PC-3 (cell line): ENCODE measurements at regions of chr7 and their contacts with region 1.

Region 1: GRCh38 chr7:117949232-117949631 is 76.0 kb upstream of the CTTNBP2 start:
- DNase-seq: peak; percentile 93
- ATAC-seq: peak; percentile 76
- H3K4me3 ChIP-seq: no peak overlapping the region
- H3K27ac ChIP-seq: peak overlapping the region; percentile 92
- H3K4me1 ChIP-seq: peaks cover 67% of the 10 kb centered on the region
- H3K27me3 ChIP-seq: no peaks in the 10 kb centered on the region
- CTCF ChIP-seq: peak; percentile 54

Region 2: GRCh38 chr7:117750612-117751563 is 198.3 kb before region 1 on chr7:
- CTCF ChIA-PET with region 1: no interaction called
- POLR2A ChIA-PET with region 1: no interaction called
- intact Hi-C with region 1: loop called (anchors 2 kb)
- DNase-seq: peak; percentile 48
- ATAC-seq: peak; percentile 24; the same call in 1 of the 2 replicates
- H3K4me3 ChIP-seq: no peak overlapping the region
- H3K27ac ChIP-seq: no peak overlapping the region
- H3K4me1 ChIP-seq: no peaks in the 10 kb centered on the region; the same call in 1 of the 2 replicates
- H3K27me3 ChIP-seq: no peaks in the 10 kb centered on the region
- CTCF ChIP-seq: peak; percentile 71

Region 3: DNA sequence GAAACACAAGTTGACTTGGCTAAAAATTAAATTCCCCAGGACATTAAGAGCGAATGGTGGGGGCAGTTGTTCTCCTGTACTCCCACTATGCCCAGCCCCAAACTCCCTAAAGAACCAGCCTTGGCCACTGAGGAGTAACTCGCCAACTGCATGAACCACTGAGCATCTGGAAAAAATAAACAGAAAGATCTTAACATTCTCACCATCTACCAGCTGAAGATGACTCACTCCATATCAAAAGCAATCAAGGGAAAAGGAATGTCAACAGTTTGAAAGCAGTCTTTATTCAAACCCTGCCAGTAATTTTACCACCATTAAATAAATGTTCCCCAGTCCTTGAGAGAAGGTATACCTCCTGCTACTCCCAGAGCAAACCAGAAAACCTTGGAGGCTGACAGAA is 121.4 kb before region 1 on chr7:
- CTCF ChIA-PET with region 1: no interaction called
- POLR2A ChIA-PET with region 1: no interaction called
- intact Hi-C with region 1: loop called (anchors 5 kb)
- DNase-seq: peak; percentile 57
- ATAC-seq: peak; percentile 94
- H3K4me3 ChIP-seq: no peak overlapping the region
- H3K27ac ChIP-seq: no peak overlapping the region
- H3K4me1 ChIP-seq: peaks cover 12% of the 10 kb centered on the region
- H3K27me3 ChIP-seq: no peaks in the 10 kb centered on the region
- CTCF ChIP-seq: no peak

Region 4: GRCh38 chr7:117993377-117994003 is 44.3 kb after region 1 on chr7:
- CTCF ChIA-PET with region 1: interaction called, 11 read pairs
- POLR2A ChIA-PET with region 1: interaction called, 4 read pairs
- intact Hi-C with region 1: loop called (anchors 1 kb)
- DNase-seq: peak; percentile 65
- ATAC-seq: peak; percentile 48
- H3K4me3 ChIP-seq: no peak overlapping the region
- H3K27ac ChIP-seq: no peak overlapping the region
- H3K4me1 ChIP-seq: peaks cover 27% of the 10 kb centered on the region
- H3K27me3 ChIP-seq: no peaks in the 10 kb centered on the region
- CTCF ChIP-seq: peak; percentile 65; the same call in 1 of the 2 replicates

Region 5: DNA sequence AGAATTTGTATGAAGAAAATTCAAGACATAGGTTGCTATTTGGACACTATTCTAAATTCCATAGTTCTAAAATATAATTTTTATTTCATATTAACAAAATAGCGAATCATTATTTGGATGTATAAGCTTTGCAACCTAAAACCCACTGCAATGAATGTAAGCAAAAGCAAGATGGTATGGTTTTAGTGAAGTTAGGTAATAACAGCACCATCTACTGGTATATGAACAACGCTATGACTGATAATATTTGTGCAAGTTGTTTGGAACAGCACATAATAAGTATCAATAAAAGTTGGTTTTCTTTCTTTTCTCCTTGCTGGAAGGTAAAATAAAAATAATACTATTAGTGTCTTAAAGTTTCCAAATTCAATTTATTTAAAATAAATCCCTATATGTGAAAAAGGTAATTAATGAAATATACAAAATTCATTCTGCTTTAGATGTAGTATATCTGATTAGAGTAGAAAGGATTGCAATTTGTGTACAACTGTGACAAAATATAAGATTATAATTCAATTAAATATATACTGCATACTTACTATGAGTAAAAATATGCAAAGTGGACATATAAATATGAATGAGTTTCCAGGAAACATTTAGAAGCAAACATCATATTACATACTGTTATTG is 155.7 kb after region 1 on chr7:
- CTCF ChIA-PET with region 1: interaction called, 6 read pairs
- POLR2A ChIA-PET with region 1: no interaction called
- intact Hi-C with region 1: loop called (anchors 2 kb)
- DNase-seq: peak; percentile 54
- ATAC-seq: peak; percentile 77
- H3K4me3 ChIP-seq: no peak overlapping the region
- H3K27ac ChIP-seq: no peak overlapping the region
- H3K4me1 ChIP-seq: peaks cover 5% of the 10 kb centered on the region; the same call in 1 of the 2 replicates
- H3K27me3 ChIP-seq: no peaks in the 10 kb centered on the region
- CTCF ChIP-seq: peak; percentile 70

Region 6: DNA sequence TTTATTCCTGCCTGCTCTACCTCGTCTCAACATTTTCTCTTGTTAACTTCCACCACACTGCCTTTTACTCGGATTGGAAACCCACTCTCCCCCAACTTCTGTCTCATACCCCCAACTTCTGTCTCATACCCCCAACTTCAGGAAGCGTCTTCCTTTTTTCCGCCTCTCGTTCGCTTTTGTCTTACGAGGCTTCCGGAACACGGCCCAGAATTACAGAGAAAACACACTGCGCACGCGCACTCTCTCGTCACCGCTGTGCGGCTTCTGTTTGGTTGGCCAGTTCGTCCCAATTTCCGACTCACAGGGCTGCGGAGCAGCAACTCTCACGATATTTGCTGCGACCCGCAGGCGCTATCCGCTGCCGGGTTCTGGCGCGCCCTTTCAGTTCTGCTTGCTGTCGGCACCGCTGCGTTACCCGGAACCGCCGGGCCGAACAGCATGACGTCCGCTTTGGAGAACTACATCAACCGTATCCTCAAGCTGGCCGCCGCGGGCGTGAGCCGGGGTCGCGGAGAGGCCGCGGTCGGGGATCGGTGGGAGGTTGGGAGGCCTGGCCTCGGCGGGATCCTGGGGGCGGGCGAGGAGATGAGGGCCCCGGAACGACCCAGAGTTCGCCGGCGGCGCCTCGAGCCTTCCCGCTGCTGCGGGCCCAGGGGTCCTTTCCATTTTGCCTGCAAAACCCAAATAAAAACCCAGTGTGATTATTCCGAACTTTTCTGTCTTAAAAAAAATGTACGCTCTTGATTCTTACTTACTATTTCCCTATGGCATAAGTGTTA is 234.7 kb after region 1 on chr7 and contains the start of gene LSM8:
- CTCF ChIA-PET with region 1: no interaction called
- POLR2A ChIA-PET with region 1: no interaction called
- intact Hi-C with region 1: loop called (anchors 5 kb)
- DNase-seq: peak; percentile 98
- ATAC-seq: peak; percentile 97
- H3K4me3 ChIP-seq: peak within 1 kb of the TSS; percentile 100
- H3K27ac ChIP-seq: peak within 1 kb of the TSS; percentile 61
- H3K4me1 ChIP-seq: peaks cover 21% of the 10 kb centered on the region; the same call in 1 of the 2 replicates
- H3K27me3 ChIP-seq: no peaks in the 10 kb centered on the region
- CTCF ChIP-seq: no peak
- total RNA-seq, gene LSM8: 41.2 and 55.1 TPM in 2 replicates

Region 7: DNA sequence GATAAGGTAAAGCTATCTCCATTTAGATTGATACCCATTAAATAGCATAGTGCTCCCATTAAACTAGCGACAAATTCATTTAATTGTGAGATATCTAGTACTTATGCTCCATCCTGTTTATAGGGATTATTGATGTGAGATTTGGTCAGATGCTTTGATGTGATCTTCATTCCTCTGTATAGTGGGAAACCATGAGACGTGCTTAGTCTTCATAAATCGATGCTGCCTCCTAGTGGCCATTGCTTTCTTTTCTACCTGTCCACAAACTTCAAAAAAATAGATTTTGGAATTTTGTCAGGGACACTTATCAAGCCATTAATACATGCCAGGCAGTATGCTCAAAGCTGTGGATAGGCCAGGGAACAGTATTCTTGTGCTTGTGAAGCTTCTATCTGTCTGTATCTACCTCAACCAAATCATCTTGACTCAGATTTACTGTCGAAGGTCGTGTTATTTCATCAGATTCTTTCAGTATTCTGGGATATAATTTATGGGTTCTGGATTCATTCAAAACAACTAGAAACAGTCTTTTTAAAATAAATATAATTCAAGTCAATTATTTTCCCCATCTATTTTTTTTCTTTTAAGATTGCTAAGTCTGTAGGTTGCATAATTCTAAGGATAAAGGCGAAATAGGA is 246.7 kb after region 1 on chr7:
- CTCF ChIA-PET with region 1: no interaction called
- POLR2A ChIA-PET with region 1: no interaction called
- intact Hi-C with region 1: loop called (anchors 5 kb)
- DNase-seq: peak; percentile 77
- ATAC-seq: peak; percentile 83
- H3K4me3 ChIP-seq: no peak overlapping the region
- H3K27ac ChIP-seq: no peak overlapping the region
- H3K4me1 ChIP-seq: no peaks in the 10 kb centered on the region
- H3K27me3 ChIP-seq: no peaks in the 10 kb centered on the region
- CTCF ChIP-seq: peak; percentile 83

Region 8: GRCh38 chr7:118389629-118390028 is 440.4 kb after region 1 on chr7:
- CTCF ChIA-PET with region 1: no interaction called
- POLR2A ChIA-PET with region 1: no interaction called
- intact Hi-C with region 1: no loop called
- DNase-seq: no peak
- ATAC-seq: no peak
- H3K4me3 ChIP-seq: no peak overlapping the region
- H3K27ac ChIP-seq: no peak overlapping the region
- H3K4me1 ChIP-seq: no peaks in the 10 kb centered on the region
- H3K27me3 ChIP-seq: no peaks in the 10 kb centered on the region
- CTCF ChIP-seq: no peak